Breast epithelium (tissue), 4 donors: ENCODE measurements at regions of chrX and their contacts with region 1.

Region 1: GRCh38 chrX:47047989-47048388 is 30.3 kb upstream of the RGN start:
- DNase-seq: no peak
- H3K4me3 ChIP-seq: no peak overlapping the region
- H3K27ac ChIP-seq: no peak overlapping the region
- H3K4me1 ChIP-seq: no peaks in the 10 kb centered on the region
- H3K27me3 ChIP-seq: peaks cover 0 to 8% of the 10 kb centered on the region in 2 donors
- CTCF ChIP-seq: no peak
- POLR2A ChIP-seq: no peak

Region 2: DNA sequence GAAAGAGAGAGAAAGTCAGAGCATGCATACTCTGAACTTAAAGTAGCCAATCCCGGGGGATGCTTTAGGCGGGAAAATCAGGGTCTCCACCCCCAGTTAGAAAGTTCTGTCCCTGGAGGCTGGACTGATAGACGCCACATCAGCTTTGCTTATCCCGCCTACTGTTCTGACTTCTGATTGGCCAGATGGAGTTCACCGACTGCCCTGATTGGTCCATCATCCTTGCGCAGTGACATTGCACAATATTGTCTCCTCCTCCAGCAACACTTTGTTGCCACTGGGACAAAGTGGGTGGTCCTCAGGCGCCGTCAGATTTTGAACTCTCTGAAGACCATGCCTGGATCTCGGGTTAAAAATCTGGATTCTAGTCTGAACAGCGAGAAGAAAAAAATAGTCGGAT is 1258.2 kb after region 1 on chrX:
- intact Hi-C with region 1: loop called (anchors 10 kb)
- DNase-seq: no peak
- H3K4me3 ChIP-seq: no peak overlapping the region
- H3K27ac ChIP-seq: no peak overlapping the region
- H3K4me1 ChIP-seq: no peaks in the 10 kb centered on the region
- H3K27me3 ChIP-seq: no peaks in the 10 kb centered on the region
- CTCF ChIP-seq: no peak
- POLR2A ChIP-seq: no peak